ENCODE measurements at regions of chr2 and their contacts with region 1.

Region 1: GRCh38 chr2:43075054-43075593 is 151.3 kb downstream of the ZFP36L2 start:
- DNase-seq: peak; percentile 96
- H3K4me3 ChIP-seq: no peak overlapping the region
- H3K27ac ChIP-seq: peak overlapping the region; percentile 90
- H3K4me1 ChIP-seq: peaks cover 34% of the 10 kb centered on the region
- H3K27me3 ChIP-seq: no peaks in the 10 kb centered on the region
- CTCF ChIP-seq: peak in 1 of 2 donors; percentile 25

Region 2: DNA sequence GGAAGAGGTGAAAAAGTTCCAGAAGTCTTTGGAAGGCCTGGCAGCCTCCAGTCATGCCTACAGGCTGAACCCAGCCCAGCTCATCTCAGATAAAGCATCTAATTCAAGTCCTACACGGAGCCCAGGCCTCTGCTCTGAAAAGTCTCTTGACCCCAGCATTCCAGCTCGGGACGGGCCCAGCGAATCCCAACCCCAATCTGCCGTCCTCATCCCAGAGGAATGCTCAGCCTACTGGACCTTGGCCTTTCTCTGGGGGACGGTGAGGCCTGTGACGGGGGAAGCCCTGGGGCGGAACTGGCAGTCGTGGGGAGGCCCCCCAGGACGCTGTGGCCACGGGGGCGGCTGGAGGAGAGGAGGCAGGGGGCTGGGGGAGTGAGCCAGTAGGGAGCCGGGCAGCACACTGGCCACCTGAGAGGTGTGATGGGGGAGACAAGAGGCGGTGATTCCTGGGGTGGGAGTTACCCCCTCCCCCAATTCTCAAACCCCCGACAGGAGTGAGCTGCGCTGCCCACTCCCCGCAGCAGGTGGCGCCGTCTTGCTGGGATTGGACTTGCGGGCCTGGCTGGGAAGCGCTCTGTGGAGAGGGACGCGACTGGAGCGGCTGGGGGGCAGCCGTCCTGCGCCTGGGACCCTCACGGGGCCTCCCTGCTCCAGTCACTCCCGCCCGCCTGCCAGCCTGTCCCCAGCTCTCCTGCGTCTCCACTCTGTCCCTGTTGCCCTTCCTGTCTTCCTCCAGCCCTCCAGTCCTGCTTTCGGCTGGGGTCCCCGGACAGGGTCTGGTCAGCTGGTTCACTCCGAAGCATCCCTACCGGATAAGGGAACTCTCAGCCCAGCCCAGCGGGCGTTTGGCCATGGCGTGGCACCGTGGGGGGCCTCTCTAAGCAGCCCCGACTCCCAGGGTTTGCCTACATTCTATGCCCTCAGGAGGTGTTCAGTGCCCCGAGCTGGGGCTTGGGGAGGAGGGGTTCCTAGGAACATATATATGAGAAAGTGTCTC is 100.1 kb before region 1 on chr2:
- CTCF ChIA-PET with region 1: no interaction called
- dilution Hi-C with region 1: no loop called
- in situ Hi-C with region 1: no loop called
- intact Hi-C with region 1: loop called (anchors 5 kb)
- DNase-seq: no peak
- H3K4me3 ChIP-seq: no peak overlapping the region
- H3K27ac ChIP-seq: peak overlapping the region; percentile 11
- H3K4me1 ChIP-seq: peaks cover 46% of the 10 kb centered on the region
- H3K27me3 ChIP-seq: no peaks in the 10 kb centered on the region
- CTCF ChIP-seq: peak; percentile 80 to 92

Region 3: DNA sequence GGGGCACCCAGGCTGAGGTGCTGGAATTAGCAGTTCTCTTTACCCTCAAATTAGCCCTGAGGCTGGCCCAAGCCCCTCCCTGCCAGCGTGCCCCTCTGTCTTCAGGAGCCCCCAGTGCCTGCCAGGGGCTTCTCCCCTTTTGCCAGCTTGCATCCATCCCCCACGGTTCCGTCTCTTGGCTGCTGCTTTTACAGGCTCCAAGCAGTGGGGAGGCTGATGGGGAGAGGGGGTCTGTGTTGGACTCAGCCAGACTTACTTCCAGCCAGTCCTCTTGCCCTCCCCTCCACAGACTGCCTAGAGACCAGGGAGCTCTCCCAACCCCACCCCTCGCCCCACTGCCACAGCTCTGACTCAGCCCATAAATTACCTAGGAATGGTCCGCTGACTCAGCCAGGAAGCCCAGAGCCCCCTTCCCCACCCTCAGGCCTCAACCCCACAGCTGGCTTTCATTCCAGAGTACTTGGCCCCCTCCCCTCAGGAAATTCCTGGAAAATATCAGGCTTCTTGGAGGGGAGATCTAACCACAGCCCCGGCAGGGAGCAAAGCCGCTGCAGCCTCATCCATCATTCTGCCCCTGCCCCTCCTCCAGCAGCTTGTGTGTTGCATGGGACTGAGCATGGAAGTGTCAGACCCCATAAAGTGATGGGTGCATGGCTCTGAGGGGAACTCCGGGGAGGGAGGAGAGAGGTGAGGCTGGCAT is 33.3 kb before region 1 on chr2:
- CTCF ChIA-PET with region 1: no interaction called
- dilution Hi-C with region 1: no loop called
- in situ Hi-C with region 1: no loop called
- intact Hi-C with region 1: loop called (anchors 2 kb)
- DNase-seq: peak; percentile 88
- H3K4me3 ChIP-seq: no peak overlapping the region
- H3K27ac ChIP-seq: peak overlapping the region; percentile 82
- H3K4me1 ChIP-seq: peaks cover 51% of the 10 kb centered on the region
- H3K27me3 ChIP-seq: no peaks in the 10 kb centered on the region
- CTCF ChIP-seq: no peak

Region 4: GRCh38 chr2:43051316-43051715 is 23.8 kb before region 1 on chr2:
- CTCF ChIA-PET with region 1: no interaction called
- dilution Hi-C with region 1: no loop called
- in situ Hi-C with region 1: no loop called
- intact Hi-C with region 1: loop called (anchors 1 kb)
- DNase-seq: peak; percentile 89
- H3K4me3 ChIP-seq: no peak overlapping the region
- H3K27ac ChIP-seq: peak overlapping the region; percentile 85
- H3K4me1 ChIP-seq: peaks cover 36% of the 10 kb centered on the region
- H3K27me3 ChIP-seq: no peaks in the 10 kb centered on the region
- CTCF ChIP-seq: no peak

Region 5: DNA sequence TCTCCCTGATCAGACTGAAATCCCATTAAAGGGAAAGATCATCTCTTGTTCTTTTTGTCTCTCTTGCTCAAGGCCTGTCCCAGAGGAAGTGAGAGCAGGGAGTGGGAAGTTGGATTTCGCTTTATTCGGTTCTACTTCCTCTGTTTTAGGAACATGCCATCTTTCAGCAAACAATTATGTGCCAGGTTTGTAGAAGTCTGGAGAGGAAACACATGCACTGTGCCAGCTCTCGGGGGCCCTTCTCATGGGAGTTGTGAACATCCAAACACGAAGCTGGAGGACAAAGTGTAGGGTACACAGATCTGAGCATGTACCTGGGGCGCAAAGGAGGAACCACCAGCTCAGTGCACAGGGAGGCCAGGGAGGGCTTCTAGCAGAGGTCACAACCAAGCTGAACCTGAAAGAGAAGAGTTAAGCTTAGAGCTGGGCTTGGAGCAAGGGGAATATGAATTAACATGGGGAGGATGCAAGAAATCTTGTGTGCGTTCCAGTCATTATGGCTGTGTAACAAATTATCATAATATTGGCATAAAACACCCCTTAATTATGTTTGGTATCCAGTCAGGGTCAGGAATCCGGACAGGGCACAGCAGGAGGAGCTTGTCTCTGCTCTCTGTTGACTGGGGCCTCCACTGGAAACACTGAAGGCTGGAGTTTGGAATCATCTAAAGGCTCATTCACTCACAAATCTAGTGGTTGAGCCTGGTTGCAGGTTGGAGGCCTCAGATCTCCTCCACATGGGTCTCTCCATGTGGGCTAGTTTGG is 22.7 kb after region 1 on chr2:
- CTCF ChIA-PET with region 1: no interaction called
- dilution Hi-C with region 1: no loop called
- in situ Hi-C with region 1: no loop called
- intact Hi-C with region 1: no loop called
- DNase-seq: no peak
- H3K4me3 ChIP-seq: no peak overlapping the region
- H3K27ac ChIP-seq: no peak overlapping the region
- H3K4me1 ChIP-seq: peaks cover 24% of the 10 kb centered on the region
- H3K27me3 ChIP-seq: no peaks in the 10 kb centered on the region
- CTCF ChIP-seq: no peak

Measured in mammary epithelial cell (primary cell).